Posterior cingulate gyrus (tissue), 11 donors: ENCODE measurements at regions of chr2 and their contacts with region 1.

Region 1: GRCh38 chr2:148020111-148021058 is at the start of gene ORC4:
- DNase-seq: peak; percentile 94 to 99 (median 96)

Region 2: GRCh38 chr2:147843864-147844696 is 176.3 kb before region 1 on chr2:
- intact Hi-C with region 1: loop called (anchors 5 kb)
- DNase-seq: peak; percentile 85 to 98 (median 89)

Region 3: DNA sequence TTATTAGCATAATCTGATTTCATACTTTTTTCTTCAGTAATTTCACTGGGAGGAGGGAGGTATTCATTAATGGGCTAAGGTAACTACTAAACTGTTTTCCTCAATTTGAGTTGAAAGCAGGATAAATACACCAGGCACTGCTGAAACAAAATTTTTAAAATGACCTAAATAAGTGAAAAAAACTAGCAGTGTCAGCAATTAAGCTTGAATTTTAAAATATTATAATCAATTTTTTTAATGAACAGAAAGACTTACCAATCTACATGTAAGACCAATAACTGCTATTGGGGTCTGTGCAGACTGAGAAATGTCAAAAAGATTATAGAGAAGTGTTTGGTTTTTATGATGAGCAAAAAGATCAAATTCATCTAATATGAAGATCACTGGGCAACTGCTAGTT is 68.3 kb before region 1 on chr2:
- intact Hi-C with region 1: no loop called
- DNase-seq: no peak

Region 4: GRCh38 chr2:148102641-148103040 is 82.3 kb after region 1 on chr2:
- intact Hi-C with region 1: loop called (anchors 5 kb)
- DNase-seq: no peak

Region 5: GRCh38 chr2:148874868-148875341 is 854.5 kb after region 1 on chr2 and contains the start of gene KIF5C:
- intact Hi-C with region 1: loop called (anchors 10 kb)
- DNase-seq: peak; percentile 80 to 99 (median 95)